ENCODE measurements at regions of chr7 and their contacts with region 1.

Region 1: GRCh38 chr7:23273141-23273599 is 26.0 kb upstream of the MALSU1 start:
- DNase-seq: peak; percentile 78
- ATAC-seq: peak; percentile 98
- H3K4me3 ChIP-seq: peak overlapping the region; percentile 56
- H3K27ac ChIP-seq: peak overlapping the region; percentile 73
- H3K4me1 ChIP-seq: peaks cover 3% of the 10 kb centered on the region; the same call in 1 of the 2 replicates
- H3K27me3 ChIP-seq: no peaks in the 10 kb centered on the region
- CTCF ChIP-seq: peak; percentile 90 to 94 (median 92)
- EP300 ChIP-seq: no peak
- POLR2A ChIP-seq: peak; percentile 39; the same call in 1 of the 2 replicates
- RAD21 ChIP-seq: peak; percentile 67

Region 2: GRCh38 chr7:22027475-22027874 is 1245.7 kb before region 1 on chr7:
- CTCF ChIA-PET with region 1: no interaction called
- POLR2A ChIA-PET with region 1: no interaction called
- RAD21 ChIA-PET with region 1: no interaction called
- SMC1A ChIA-PET with region 1: no interaction called
- in situ Hi-C with region 1: no loop called
- intact Hi-C with region 1: no loop called
- DNase-seq: no peak
- ATAC-seq: no peak
- H3K4me3 ChIP-seq: no peak overlapping the region
- H3K27ac ChIP-seq: no peak overlapping the region
- H3K4me1 ChIP-seq: no peaks in the 10 kb centered on the region
- H3K27me3 ChIP-seq: no peaks in the 10 kb centered on the region
- CTCF ChIP-seq: no peak
- EP300 ChIP-seq: no peak
- POLR2A ChIP-seq: no peak
- RAD21 ChIP-seq: no peak

Region 3: GRCh38 chr7:23261843-23262452 is 11.2 kb before region 1 on chr7:
- CTCF ChIA-PET with region 1: interaction called, 167 read pairs
- POLR2A ChIA-PET with region 1: interaction called, 3 read pairs
- RAD21 ChIA-PET with region 1: interaction called, 30 read pairs
- SMC1A ChIA-PET with region 1: interaction called, 66 read pairs
- in situ Hi-C with region 1: no loop called
- intact Hi-C with region 1: no loop called
- DNase-seq: no peak
- ATAC-seq: peak; percentile 95
- H3K4me3 ChIP-seq: no peak overlapping the region
- H3K27ac ChIP-seq: no peak overlapping the region
- H3K4me1 ChIP-seq: peaks cover 11% of the 10 kb centered on the region
- H3K27me3 ChIP-seq: no peaks in the 10 kb centered on the region; a peak in 1 of 4 replicates
- CTCF ChIP-seq: peak; percentile 83 to 94 (median 86)
- EP300 ChIP-seq: no peak
- POLR2A ChIP-seq: no peak
- RAD21 ChIP-seq: peak; percentile 87

Region 4: GRCh38 chr7:23347682-23348180 is 74.6 kb after region 1 on chr7:
- CTCF ChIA-PET with region 1: interaction called, 11 read pairs
- POLR2A ChIA-PET with region 1: no interaction called
- RAD21 ChIA-PET with region 1: interaction called, 5 read pairs
- SMC1A ChIA-PET with region 1: interaction called, 11 read pairs
- in situ Hi-C with region 1: no loop called
- intact Hi-C with region 1: loop called (anchors 2 kb)
- DNase-seq: no peak
- ATAC-seq: 0 out of 3 replicates have a peak, but pooled peaks have one; percentile 21
- H3K4me3 ChIP-seq: no peak overlapping the region
- H3K27ac ChIP-seq: no peak overlapping the region
- H3K4me1 ChIP-seq: peaks cover 19% of the 10 kb centered on the region
- H3K27me3 ChIP-seq: no peaks in the 10 kb centered on the region
- CTCF ChIP-seq: no peak
- EP300 ChIP-seq: no peak
- POLR2A ChIP-seq: no peak
- RAD21 ChIP-seq: no peak

Region 5: DNA sequence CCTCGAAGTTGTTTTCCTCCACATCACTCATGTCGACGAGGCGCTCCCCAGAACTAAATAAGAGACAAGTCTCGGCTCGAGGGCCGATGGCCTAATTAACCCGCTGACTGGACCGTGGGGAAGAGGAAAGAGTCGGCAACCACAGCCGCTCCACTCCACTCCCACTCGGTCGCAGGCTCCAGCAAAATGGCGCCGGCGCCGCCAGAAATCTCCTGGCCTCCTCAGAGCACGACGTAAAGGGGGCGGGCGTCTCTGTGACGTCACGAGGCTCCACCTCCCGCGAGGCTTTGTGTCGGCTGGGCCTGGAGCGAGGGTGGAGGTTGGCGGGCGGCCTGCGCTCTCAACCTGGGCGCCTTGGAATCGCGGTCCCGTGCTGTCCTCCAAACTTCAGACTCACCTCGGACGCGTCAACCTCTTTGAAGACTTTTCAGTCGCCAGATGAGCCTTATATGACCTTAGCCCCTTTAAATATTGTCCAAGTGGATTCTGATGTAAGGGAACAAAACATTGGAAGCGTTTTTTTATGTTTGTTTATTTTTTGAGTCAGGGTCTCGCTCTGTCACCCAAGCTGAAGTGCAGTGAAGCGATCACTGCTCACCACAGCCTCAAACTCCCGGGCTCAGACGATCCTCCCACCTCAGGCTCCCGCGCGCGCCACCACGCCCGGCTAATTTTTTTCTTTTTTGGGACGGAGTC is 258.8 kb after region 1 on chr7 and contains the start of gene TRA2A:
- CTCF ChIA-PET with region 1: interaction called, 4 read pairs
- POLR2A ChIA-PET with region 1: interaction called, 3 read pairs
- RAD21 ChIA-PET with region 1: interaction called, 3 read pairs
- SMC1A ChIA-PET with region 1: interaction called, 4 read pairs
- in situ Hi-C with region 1: no loop called
- intact Hi-C with region 1: loop called (anchors 1 kb)
- DNase-seq: peak; percentile 86
- ATAC-seq: peak; percentile 84
- H3K4me3 ChIP-seq: peak within 1 kb of the TSS; percentile 99
- H3K27ac ChIP-seq: peak within 1 kb of the TSS; percentile 99
- H3K4me1 ChIP-seq: 0 out of 2 replicates have a peak, but pooled peaks cover 2% of the 10 kb centered on the region
- H3K27me3 ChIP-seq: no peaks in the 10 kb centered on the region
- CTCF ChIP-seq: no peak
- EP300 ChIP-seq: 0 out of 4 replicates have a peak, but pooled peaks of 1 of the 2 experiments have one; percentile 22
- POLR2A ChIP-seq: peak; percentile 98
- RAD21 ChIP-seq: no peak
- polyA plus RNA-seq, gene TRA2A: 69.2 to 83.1 TPM

Region 6: GRCh38 chr7:23696916-23697441 is 423.8 kb after region 1 on chr7:
- CTCF ChIA-PET with region 1: interaction called, 3 read pairs
- POLR2A ChIA-PET with region 1: interaction called, 7 read pairs
- RAD21 ChIA-PET with region 1: interaction called, 3 read pairs
- SMC1A ChIA-PET with region 1: interaction called, 3 read pairs
- in situ Hi-C with region 1: loop called (anchors 5 kb)
- intact Hi-C with region 1: no loop called
- DNase-seq: no peak
- ATAC-seq: peak; percentile 97
- H3K4me3 ChIP-seq: no peak overlapping the region
- H3K27ac ChIP-seq: no peak overlapping the region
- H3K4me1 ChIP-seq: no peaks in the 10 kb centered on the region
- H3K27me3 ChIP-seq: no peaks in the 10 kb centered on the region
- CTCF ChIP-seq: peak; percentile 72 to 89 (median 73)
- EP300 ChIP-seq: no peak
- POLR2A ChIP-seq: no peak
- RAD21 ChIP-seq: peak; percentile 44

Measured in GM12878 (cell line).